ENCODE measurements at regions of chr1 and their contacts with region 1.

Region 1: DNA sequence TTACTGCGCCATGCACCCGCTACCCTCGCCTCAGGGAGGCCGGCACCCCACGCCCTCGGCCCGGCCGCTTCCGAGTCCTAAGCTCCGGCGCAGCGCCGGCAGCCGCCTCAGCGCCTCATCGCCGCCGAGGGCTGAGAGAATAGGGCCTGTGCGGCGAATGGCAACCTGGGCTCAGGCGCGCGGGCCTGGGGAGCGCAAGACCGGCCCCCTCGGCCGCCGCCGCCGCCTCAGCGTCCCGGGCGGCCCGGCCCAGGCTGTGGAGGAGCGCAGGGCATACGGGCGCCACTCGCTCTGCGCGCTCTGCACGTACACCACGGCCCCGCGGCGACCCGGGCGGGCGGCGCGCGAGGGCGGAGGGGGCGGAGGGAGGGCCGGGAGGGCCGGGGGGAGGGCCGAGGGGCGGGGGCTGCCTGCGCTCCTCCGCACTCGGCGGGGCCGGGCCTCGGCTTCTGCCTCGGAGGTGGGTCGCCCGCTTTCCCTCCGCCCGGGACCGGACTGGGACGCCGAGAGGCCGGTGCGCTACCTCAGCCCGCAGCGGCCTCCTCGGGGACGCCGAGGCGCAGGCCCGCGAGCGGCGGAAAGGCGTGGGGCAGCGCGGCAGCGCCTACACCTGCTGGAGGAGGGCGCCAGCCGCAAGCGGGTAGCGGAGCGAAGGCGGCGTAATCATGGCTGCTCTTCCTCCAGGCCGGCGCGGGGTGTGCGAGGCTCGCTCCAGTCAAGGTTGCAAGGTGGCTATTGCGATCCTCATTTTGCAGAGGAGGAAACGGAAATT is at the start of gene EGLN1:
- DNase-seq: peak; percentile 80
- H3K4me3 Mint-ChIP-seq: peak within 1 kb of the TSS; percentile 90
- H3K27ac Mint-ChIP-seq: peak within 1 kb of the TSS; percentile 83
- H3K4me1 Mint-ChIP-seq: peaks cover 41% of the 10 kb centered on the region
- H3K27me3 Mint-ChIP-seq: peaks cover 32% of the 10 kb centered on the region
- total RNA-seq, gene EGLN1: 20.2 and 24.4 TPM in 2 replicates

Region 2: DNA sequence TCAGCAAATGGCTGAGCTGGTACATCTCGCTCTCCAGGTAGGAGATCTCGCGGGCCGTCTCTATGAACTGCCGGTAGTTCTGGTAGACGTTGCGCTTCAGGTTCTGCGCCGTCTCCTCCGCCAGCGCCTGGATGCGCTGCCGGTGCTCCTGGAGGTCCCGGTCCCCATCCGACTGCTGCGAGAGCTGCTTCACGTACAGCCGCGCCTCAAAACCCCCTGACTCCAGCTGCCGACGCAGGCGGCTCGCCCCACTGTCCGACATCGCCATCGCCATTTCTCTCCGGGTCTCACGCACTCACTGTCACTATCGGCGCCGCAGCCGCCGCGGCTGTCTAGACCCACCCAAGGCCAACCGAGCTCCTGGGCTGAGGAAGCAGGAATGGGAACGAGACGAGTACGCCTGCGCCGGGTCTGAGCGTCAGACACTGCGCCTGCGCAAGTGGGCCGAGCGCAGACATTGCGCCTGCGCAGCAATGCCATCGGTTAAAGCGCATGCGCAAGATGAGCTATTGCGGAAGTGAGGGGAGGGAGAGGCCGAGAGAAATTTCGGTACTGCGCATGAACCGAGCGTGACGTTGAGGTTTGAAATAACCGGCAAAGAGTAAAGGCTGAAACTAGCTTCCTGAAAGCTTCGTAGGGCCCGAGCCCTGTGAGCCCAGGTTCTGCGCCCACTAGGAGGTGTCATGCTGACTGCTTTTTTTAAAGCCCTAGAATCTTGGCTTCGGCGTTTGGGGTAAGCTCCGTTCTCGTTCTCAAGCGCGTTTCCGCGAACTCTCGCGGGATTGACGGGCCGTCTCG is 84.5 kb before region 1 on chr1 and contains the start of gene EXOC8:
- intact Hi-C with region 1: loop called (anchors 1 kb)
- DNase-seq: peak; percentile 98
- H3K4me3 Mint-ChIP-seq: peak within 1 kb of the TSS; percentile 99
- H3K27ac Mint-ChIP-seq: peak within 1 kb of the TSS; percentile 99
- H3K4me1 Mint-ChIP-seq: peaks cover 42% of the 10 kb centered on the region
- H3K27me3 Mint-ChIP-seq: peaks cover 2% of the 10 kb centered on the region
- total RNA-seq, gene EXOC8: 12.8 and 13.2 TPM in 2 replicates

Region 3: DNA sequence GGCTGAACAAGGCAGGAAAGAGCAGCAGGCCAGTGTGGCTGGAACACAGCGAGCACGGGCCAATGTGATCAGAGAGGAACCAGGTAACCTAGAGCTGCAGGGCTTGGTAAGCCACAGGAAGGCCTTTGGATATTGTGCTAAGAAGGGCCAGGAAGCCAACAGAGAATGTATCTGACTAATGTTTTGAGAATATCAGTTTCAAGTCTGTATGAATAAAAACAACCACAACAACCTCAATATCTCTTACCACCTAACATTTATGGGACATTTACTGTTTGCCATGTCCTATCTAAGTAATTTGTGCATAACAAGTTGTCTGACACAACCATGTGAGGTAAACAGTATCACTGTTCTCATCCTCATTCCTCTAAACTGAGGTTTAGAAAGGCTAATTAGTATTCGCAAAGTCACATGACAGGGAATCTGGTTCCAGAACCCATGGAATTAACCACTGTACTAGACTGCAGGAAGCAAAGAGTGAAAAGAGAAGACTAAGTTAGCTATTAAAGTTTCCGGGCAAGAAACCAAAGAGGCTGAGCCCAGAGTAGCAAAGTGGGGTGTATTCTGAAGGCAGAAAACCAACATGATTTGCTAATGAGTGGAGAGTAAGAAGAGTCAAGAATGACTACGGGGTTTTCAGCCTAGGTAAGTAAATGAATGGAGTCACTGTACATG is 45.2 kb before region 1 on chr1:
- intact Hi-C with region 1: loop called (anchors 1 kb)
- DNase-seq: no peak
- H3K4me3 Mint-ChIP-seq: peak overlapping the region; percentile 28
- H3K27ac Mint-ChIP-seq: peak overlapping the region; percentile 83
- H3K4me1 Mint-ChIP-seq: peaks cover 34% of the 10 kb centered on the region
- H3K27me3 Mint-ChIP-seq: no peaks in the 10 kb centered on the region

Region 4: GRCh38 chr1:231528172-231529029 is 106.2 kb after region 1 on chr1 and contains the start of gene TSNAX:
- intact Hi-C with region 1: loop called (anchors 1 kb)
- DNase-seq: peak; percentile 89
- H3K4me3 Mint-ChIP-seq: peak within 1 kb of the TSS; percentile 97
- H3K27ac Mint-ChIP-seq: peak within 1 kb of the TSS; percentile 99
- H3K4me1 Mint-ChIP-seq: peaks cover 30% of the 10 kb centered on the region
- H3K27me3 Mint-ChIP-seq: no peaks in the 10 kb centered on the region
- total RNA-seq, gene TSNAX: 43.9 and 44.4 TPM in 2 replicates